ENCODE measurements at regions of chr16 and their contacts with region 1.

Region 1: GRCh38 chr16:20383106-20384029 is 21.2 kb downstream of the PDILT start:
- DNase-seq: peak; percentile 81
- H3K4me3 Mint-ChIP-seq: no peak overlapping the region
- H3K27ac Mint-ChIP-seq: no peak overlapping the region
- H3K4me1 Mint-ChIP-seq: no peaks in the 10 kb centered on the region
- H3K27me3 Mint-ChIP-seq: peaks cover 50% of the 10 kb centered on the region
- CTCF ChIP-seq: peak; percentile 89

Region 2: GRCh38 chr16:19583665-19584300 is 799.6 kb before region 1 on chr16:
- CTCF ChIA-PET with region 1: interaction called, 3 read pairs
- intact Hi-C with region 1: loop called (anchors 5 kb)
- DNase-seq: peak; percentile 61
- H3K4me3 Mint-ChIP-seq: no peak overlapping the region
- H3K27ac Mint-ChIP-seq: no peak overlapping the region
- H3K4me1 Mint-ChIP-seq: peaks cover 8% of the 10 kb centered on the region
- H3K27me3 Mint-ChIP-seq: no peaks in the 10 kb centered on the region
- CTCF ChIP-seq: peak; percentile 91

Region 3: GRCh38 chr16:19898924-19899604 is 484.3 kb before region 1 on chr16:
- CTCF ChIA-PET with region 1: interaction called, 30 read pairs
- intact Hi-C with region 1: loop called (anchors 1 kb)
- DNase-seq: peak; percentile 75
- H3K4me3 Mint-ChIP-seq: no peak overlapping the region
- H3K27ac Mint-ChIP-seq: no peak overlapping the region
- H3K4me1 Mint-ChIP-seq: peaks cover 11% of the 10 kb centered on the region
- H3K27me3 Mint-ChIP-seq: peaks cover 65% of the 10 kb centered on the region
- CTCF ChIP-seq: peak; percentile 86

Region 4: GRCh38 chr16:19980632-19981265 is 402.6 kb before region 1 on chr16:
- CTCF ChIA-PET with region 1: interaction called, 3 read pairs
- intact Hi-C with region 1: loop called (anchors 10 kb)
- DNase-seq: peak; percentile 10
- H3K4me3 Mint-ChIP-seq: no peak overlapping the region
- H3K27ac Mint-ChIP-seq: no peak overlapping the region
- H3K4me1 Mint-ChIP-seq: no peaks in the 10 kb centered on the region
- H3K27me3 Mint-ChIP-seq: peaks cover 81% of the 10 kb centered on the region
- CTCF ChIP-seq: no peak

Region 5: GRCh38 chr16:20327444-20328041 is 55.8 kb before region 1 on chr16 and contains the start of gene GP2:
- CTCF ChIA-PET with region 1: no interaction called
- intact Hi-C with region 1: no loop called
- DNase-seq: no peak
- H3K4me3 Mint-ChIP-seq: no peak within 1 kb of the TSS
- H3K27ac Mint-ChIP-seq: no peak within 1 kb of the TSS
- H3K4me1 Mint-ChIP-seq: no peaks in the 10 kb centered on the region
- H3K27me3 Mint-ChIP-seq: peaks cover 60% of the 10 kb centered on the region
- CTCF ChIP-seq: no peak
- total RNA-seq, gene GP2: not detected in 2 replicates

Region 6: GRCh38 chr16:20359997-20360396 is 23.4 kb before region 1 on chr16:
- CTCF ChIA-PET with region 1: no interaction called
- intact Hi-C with region 1: no loop called
- DNase-seq: no peak
- H3K4me3 Mint-ChIP-seq: no peak overlapping the region
- H3K27ac Mint-ChIP-seq: no peak overlapping the region
- H3K4me1 Mint-ChIP-seq: no peaks in the 10 kb centered on the region
- H3K27me3 Mint-ChIP-seq: peaks cover 86% of the 10 kb centered on the region
- CTCF ChIP-seq: no peak

Measured in Calu3 (cell line).